ENCODE measurements at regions of chr15 and their contacts with region 1.

Region 1: GRCh38 chr15:79380755-79381497 is 51.2 kb upstream of the MINAR1 start:
- DNase-seq: peak; percentile 81
- H3K4me3 Mint-ChIP-seq: no peak overlapping the region
- H3K27ac Mint-ChIP-seq: no peak overlapping the region
- H3K4me1 Mint-ChIP-seq: peaks cover 4% of the 10 kb centered on the region
- H3K27me3 Mint-ChIP-seq: no peaks in the 10 kb centered on the region

Region 2: DNA sequence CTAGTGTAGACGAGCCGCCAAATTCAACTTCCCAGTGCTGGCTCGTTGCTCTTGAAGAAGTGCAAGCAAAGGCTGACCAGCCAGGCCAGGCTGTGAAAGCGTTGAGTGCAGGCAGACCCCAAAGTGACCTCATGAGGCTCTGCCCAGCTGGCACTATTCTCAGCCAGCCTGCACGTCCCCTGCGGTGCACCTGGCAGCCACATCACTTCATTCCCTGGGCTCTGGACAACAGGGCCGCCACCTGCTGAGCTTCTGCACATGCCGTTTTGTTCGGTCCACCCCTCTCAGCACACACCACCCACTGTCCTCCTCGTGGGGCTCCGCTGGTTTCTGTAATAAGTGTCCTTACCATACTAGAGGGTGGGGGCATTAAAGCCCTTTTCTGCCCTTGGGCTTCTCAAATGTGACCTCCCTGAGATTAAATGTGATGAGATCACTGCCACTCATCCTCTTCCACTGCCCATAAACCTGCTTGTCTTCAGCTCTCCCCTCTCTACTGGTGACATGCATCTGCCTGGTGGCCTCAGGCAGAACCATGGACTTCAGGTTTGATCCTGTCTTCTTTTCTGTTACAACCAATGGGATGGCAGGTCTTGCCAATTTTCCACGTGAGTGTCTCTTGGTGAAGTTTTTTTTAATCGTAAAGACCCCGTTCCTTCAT is 296.5 kb before region 1 on chr15:
- CTCF ChIA-PET with region 1: no interaction called
- POLR2A ChIA-PET with region 1: no interaction called
- intact Hi-C with region 1: no loop called
- DNase-seq: peak; percentile 5
- H3K4me3 Mint-ChIP-seq: no peak overlapping the region
- H3K27ac Mint-ChIP-seq: no peak overlapping the region
- H3K4me1 Mint-ChIP-seq: no peaks in the 10 kb centered on the region
- H3K27me3 Mint-ChIP-seq: peaks cover 13% of the 10 kb centered on the region

Region 3: DNA sequence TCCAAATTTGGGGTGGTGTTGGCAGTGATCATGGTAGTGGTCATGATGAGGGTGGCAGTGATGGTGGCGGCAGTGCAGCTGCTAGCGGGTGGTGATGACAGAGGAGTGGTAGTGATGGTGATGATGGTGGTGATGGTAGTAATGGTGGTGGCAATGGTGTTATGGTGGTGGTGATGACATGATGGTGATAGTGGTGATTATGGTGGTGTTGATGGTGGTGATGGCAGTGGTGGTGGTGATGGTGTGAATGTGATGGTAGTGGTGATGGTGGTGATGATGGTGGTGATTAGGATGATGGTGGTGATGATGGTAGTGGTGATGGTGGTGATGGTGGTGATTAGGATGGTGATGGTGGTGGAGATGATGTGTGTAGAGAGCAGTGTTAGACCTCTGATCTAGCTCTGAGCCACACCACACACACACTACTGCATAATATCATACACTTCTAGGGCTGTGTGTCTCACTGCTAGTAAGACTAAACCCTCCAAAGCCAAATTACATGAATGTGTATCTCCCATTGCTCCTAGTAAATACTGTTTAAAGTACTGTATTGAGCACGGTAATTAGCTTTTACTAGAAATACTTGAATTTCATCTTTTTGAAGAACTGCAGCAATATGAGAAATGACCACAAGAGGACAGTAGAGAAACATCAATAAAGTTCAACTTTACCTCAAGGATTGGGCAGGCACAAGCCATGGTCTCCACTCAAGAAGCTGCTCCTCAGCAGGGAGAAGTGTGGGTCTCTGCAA is 41.2 kb before region 1 on chr15:
- CTCF ChIA-PET with region 1: interaction called, 15 read pairs
- POLR2A ChIA-PET with region 1: no interaction called
- intact Hi-C with region 1: no loop called
- DNase-seq: no peak
- H3K4me3 Mint-ChIP-seq: no peak overlapping the region
- H3K27ac Mint-ChIP-seq: no peak overlapping the region
- H3K4me1 Mint-ChIP-seq: no peaks in the 10 kb centered on the region
- H3K27me3 Mint-ChIP-seq: no peaks in the 10 kb centered on the region

Region 4: GRCh38 chr15:79364571-79365240 is 16.2 kb before region 1 on chr15:
- CTCF ChIA-PET with region 1: interaction called, 30 read pairs
- POLR2A ChIA-PET with region 1: no interaction called
- intact Hi-C with region 1: no loop called
- DNase-seq: no peak
- H3K4me3 Mint-ChIP-seq: no peak overlapping the region
- H3K27ac Mint-ChIP-seq: no peak overlapping the region
- H3K4me1 Mint-ChIP-seq: no peaks in the 10 kb centered on the region
- H3K27me3 Mint-ChIP-seq: no peaks in the 10 kb centered on the region

Region 5: DNA sequence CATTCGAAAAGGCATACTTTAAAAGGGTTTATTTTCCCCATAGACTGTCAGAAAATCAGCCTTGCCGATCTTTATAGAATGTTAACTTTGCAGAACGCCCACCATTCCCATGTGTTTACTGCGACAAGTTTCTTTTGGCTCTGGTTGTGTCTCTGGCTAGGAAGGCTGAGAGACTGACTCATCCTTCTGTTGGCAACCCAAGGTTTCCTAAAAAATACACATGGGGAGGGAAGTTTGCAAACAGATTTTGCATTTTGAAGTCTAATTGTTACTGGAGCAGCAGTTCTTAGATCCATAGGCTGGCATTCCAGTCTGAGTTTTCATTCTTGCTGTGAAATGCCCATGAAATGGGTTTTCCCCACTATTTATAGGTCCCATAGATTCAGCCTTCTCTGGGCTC is 13.3 kb after region 1 on chr15:
- CTCF ChIA-PET with region 1: interaction called, 12 read pairs
- POLR2A ChIA-PET with region 1: no interaction called
- intact Hi-C with region 1: no loop called
- DNase-seq: no peak
- H3K4me3 Mint-ChIP-seq: no peak overlapping the region
- H3K27ac Mint-ChIP-seq: no peak overlapping the region
- H3K4me1 Mint-ChIP-seq: no peaks in the 10 kb centered on the region
- H3K27me3 Mint-ChIP-seq: no peaks in the 10 kb centered on the region

Region 6: GRCh38 chr15:79513940-79514339 is 133.0 kb after region 1 on chr15:
- CTCF ChIA-PET with region 1: no interaction called
- POLR2A ChIA-PET with region 1: no interaction called
- intact Hi-C with region 1: no loop called
- DNase-seq: no peak
- H3K4me3 Mint-ChIP-seq: no peak overlapping the region
- H3K27ac Mint-ChIP-seq: no peak overlapping the region
- H3K4me1 Mint-ChIP-seq: no peaks in the 10 kb centered on the region
- H3K27me3 Mint-ChIP-seq: no peaks in the 10 kb centered on the region

Region 7: GRCh38 chr15:79596051-79596507 is 215.2 kb after region 1 on chr15:
- CTCF ChIA-PET with region 1: interaction called, 157 read pairs
- POLR2A ChIA-PET with region 1: no interaction called
- intact Hi-C with region 1: loop called (anchors 1 kb)
- DNase-seq: peak; percentile 73
- H3K4me3 Mint-ChIP-seq: no peak overlapping the region
- H3K27ac Mint-ChIP-seq: no peak overlapping the region
- H3K4me1 Mint-ChIP-seq: no peaks in the 10 kb centered on the region
- H3K27me3 Mint-ChIP-seq: peaks cover 12% of the 10 kb centered on the region

Region 8: DNA sequence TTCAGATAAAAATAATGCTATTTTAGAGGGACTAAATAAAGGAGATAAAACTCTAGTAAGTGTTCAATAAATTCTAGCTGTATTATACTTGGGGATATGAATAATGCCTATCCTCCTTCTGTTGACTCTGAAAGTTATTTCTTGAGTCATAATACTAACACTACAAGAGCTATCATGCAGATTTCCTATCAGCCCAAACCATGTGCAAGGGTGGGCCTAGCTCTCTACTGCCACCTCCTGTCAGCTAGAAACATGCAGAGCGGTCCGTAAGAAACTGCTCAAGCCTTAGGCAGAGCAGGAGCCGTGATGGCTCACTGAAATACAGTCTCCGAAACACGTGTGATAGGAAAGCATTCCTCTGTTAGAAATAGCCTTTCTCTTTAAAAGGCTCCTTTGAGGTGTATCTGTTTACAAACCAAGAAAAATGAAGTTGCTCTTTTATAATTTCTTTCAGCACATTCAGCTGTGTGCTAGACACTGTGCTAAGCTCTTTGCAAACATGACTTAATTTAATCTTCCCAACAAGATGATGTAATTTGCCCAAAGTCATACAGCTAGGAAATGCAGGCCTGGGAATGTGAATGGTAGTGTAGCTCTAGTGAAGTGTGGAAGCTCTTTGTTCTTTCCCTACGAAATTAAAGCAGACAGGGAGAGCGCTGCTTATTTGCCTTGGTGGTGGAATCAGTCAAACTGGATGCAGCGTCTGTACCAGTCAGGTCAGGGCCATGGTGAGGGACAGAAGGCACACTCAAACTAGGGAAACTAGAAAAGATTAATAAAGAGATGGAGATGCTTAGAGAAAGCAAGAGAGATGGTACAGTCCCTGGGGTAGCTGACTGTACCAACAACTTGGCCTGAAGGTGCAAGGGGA is 472.8 kb after region 1 on chr15:
- CTCF ChIA-PET with region 1: interaction called, 154 read pairs
- POLR2A ChIA-PET with region 1: no interaction called
- intact Hi-C with region 1: loop called (anchors 1 kb)
- DNase-seq: peak; percentile 83
- H3K4me3 Mint-ChIP-seq: no peak overlapping the region
- H3K27ac Mint-ChIP-seq: no peak overlapping the region
- H3K4me1 Mint-ChIP-seq: peaks cover 15% of the 10 kb centered on the region
- H3K27me3 Mint-ChIP-seq: no peaks in the 10 kb centered on the region

Region 9: DNA sequence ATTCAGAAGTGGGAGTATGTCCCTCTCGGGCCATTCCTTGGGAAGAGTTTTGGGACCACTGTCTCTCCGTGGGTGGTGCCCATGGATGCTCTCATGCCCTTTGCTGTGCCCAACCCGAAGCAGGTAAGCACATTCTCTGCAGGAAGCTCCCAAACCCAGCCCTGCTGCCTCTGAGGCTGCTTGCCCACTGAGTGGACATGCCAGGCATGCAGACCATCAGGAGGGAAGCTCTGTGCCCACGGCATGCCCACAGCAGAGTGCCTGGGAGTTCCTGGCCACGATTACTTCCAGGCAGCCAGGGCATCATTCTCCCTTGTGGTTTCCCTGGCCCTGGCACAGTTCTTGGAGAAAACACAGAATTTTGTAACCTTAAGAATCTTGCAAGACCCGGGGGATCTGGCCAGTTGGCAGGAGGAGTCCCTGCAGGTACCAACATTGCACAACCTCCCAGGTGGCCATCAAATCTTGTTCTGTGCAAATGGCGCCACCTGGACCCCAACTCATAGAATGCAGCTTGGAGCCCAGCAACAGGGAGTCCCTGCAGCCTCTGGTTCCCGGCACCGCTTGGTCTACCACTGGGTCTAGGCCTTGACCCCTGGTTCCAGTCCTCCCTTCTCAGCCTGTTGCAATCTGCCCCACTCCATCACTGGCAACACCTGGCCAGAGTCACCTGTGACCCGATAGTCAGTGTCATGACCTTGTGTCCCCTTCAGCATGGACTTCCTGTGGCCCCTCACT is 792.3 kb after region 1 on chr15:
- CTCF ChIA-PET with region 1: interaction called, 14 read pairs
- POLR2A ChIA-PET with region 1: no interaction called
- intact Hi-C with region 1: loop called (anchors 5 kb)
- DNase-seq: peak; percentile 84
- H3K4me3 Mint-ChIP-seq: no peak overlapping the region
- H3K27ac Mint-ChIP-seq: no peak overlapping the region
- H3K4me1 Mint-ChIP-seq: no peaks in the 10 kb centered on the region
- H3K27me3 Mint-ChIP-seq: no peaks in the 10 kb centered on the region

Measured in activated CD4-positive, alpha-beta memory T cell treated with anti-CD3 and anti-CD28 coated beads for 36 hours (primary cell).